ENCODE measurements at regions of chr18 and their contacts with region 1.

Region 1: DNA sequence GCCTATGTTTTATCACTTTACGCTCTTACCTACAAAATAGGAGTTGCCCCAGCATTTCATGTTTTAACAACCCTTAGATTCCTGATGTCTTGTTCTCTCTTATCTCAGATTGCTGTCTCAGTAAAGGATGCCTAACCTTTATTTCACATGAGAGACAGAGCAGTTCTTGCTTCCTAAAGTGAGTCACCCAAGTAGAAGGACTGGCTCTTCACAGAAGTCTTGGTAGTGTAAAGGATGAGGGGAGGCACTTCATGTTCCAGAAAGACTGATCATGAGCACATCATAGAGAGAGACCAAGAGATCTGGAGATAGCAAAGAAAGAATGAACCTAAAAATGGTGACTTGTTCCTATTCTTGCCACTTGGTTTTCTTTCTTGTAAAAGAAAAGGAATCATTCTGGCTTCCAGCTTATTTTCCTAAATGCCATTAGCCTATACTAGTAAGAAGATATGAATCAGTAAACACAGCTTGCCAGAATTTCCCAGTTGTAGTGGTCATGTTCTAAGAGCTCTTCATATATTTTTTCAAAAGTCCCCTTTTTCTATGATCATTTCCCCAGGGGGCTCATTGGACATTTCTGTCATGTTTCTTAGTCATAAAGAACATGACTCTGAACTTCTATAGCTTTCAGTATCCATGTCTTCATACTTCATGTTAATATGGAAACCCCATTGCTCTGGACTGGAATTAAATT is 54.9 kb downstream of the MAPRE2 start:
- DNase-seq: no peak
- CTCF ChIP-seq: no peak

Region 2: DNA sequence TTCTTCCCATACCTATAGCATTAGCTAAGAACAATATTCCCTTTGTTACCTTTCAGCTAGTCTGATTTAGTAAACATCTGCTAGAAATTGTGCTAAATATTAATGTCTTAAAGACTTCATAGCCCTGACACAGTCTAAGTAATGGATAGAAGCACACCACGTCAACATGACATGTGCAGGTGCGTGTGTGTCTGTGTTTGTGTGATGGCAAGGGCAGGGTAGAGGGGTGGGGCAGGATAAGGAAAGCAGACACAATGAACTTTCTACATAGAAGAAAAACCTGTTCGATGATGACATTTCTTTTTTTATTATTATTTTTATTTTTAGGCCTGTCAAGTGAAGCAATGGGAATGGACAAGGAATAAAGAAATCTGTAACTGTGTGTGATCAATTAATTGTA is 1094.8 kb before region 1 on chr18:
- CTCF ChIA-PET with region 1: no interaction called
- POLR2A ChIA-PET with region 1: no interaction called
- DNase-seq: no peak
- CTCF ChIP-seq: no peak

Region 3: DNA sequence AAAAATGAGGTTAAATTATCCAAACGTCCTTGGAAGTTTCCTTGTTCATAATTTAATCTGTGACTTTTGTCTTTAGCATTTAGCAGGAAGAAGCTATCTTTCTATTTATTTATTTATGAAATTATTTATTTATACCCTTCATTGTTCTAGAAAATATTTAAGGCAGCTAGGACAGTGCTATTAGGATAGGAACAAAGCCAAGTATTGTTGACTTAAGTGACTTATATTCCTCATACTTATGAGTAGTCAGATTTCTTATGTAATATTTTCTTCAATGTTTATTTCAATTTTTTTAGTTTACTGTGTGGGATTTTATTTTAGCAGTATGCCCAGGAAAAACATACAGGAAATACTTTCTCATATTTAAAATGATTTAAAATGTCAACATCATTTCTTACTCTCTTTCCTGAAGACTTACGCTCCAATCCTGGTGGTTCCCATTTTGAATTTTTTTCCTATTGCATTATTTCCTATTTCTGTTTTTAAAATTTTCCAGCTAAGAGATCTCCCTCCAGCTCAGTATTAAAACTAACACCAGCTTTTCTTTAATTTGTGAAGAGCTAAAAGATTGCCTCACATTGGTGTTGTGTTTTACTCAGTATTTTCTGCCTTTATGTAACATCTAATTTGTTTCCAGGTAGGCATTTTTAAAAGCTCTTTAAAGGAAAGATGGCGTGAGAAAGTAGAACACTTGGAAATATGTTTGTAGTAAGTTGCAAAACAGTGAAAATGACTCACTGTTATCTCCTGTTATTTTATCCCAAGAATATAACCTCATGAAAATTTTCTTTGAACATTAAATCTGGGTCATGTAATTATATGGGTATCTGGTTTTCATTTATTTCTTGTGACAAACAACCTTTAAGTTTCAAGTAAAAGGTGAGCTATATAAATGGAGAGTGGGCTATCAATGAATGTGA is 22.7 kb before region 1 on chr18:
- CTCF ChIA-PET with region 1: interaction called, 12 read pairs
- POLR2A ChIA-PET with region 1: no interaction called
- DNase-seq: no peak
- CTCF ChIP-seq: no peak

Region 4: DNA sequence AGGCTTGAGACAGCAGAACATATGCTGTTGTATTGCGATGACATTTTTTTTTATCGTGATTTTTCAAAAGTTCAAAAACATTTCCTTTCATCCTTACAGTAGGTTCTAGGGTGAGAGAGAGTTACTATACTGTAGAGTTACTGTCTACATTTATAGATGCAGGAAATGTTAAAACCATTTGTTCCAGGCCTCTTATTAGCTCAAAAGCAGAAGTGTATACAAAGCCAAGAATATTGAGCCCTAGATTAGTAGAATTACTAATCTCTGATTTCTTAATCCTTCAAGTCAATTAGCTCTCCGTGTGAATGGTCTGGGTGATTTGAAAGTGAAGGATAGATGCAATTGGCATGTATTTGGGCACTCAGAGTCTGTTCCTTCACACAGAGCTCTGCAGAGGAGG is 18.2 kb after region 1 on chr18:
- CTCF ChIA-PET with region 1: interaction called, 12 read pairs
- POLR2A ChIA-PET with region 1: no interaction called
- DNase-seq: no peak
- CTCF ChIP-seq: no peak

Region 5: DNA sequence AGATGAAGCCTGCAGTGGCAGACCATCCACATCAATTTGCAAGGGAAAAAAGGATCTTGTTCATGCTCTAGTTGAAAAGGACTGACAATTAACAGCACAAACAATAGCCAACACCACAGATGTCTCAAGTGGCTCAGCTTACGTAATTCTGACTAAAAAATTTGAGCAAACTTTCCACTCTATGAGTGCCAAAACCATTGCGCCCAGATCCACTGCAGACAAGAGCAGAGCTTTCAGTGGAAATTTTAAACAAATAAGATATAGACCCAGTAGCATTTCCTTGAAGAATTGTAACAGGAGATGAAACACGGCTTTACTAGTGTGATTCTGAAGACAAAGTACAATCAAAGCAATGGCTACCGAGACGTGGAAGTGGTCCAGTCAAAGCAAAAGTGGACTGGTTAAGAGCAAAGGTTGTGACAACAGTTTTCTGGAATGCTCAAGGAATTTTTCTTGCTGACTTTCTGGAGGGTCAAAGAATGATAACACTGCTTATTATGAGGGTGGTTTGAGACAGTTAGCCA is 293.0 kb after region 1 on chr18:
- CTCF ChIA-PET with region 1: no interaction called
- POLR2A ChIA-PET with region 1: no interaction called
- DNase-seq: no peak
- CTCF ChIP-seq: no peak

Measured in GM10248 (cell line).